Endothelial cell of umbilical vein (primary cell): ENCODE measurements at regions of chr7 and their contacts with region 1.

Region 1: GRCh38 chr7:4725014-4725849 is 43.1 kb downstream of the FOXK1 start:
- DNase-seq: peak; percentile 95
- H3K4me3 ChIP-seq: peak overlapping the region; percentile 26 to 30 (median 28)
- H3K27ac ChIP-seq: peak overlapping the region; percentile 92
- H3K4me1 ChIP-seq: peaks cover 23% of the 10 kb centered on the region
- H3K27me3 ChIP-seq: no peaks in the 10 kb centered on the region
- CTCF ChIP-seq: no peak
- POLR2A ChIP-seq: peak; percentile 67

Region 2: GRCh38 chr7:4665661-4666060 is 59.6 kb before region 1 on chr7:
- CTCF ChIA-PET with region 1: no interaction called
- POLR2A ChIA-PET with region 1: no interaction called
- dilution Hi-C with region 1: no loop called
- intact Hi-C with region 1: no loop called
- DNase-seq: peak; percentile 80
- H3K4me3 ChIP-seq: no peak overlapping the region
- H3K27ac ChIP-seq: peak overlapping the region; percentile 47
- H3K4me1 ChIP-seq: peaks cover 2% of the 10 kb centered on the region
- H3K27me3 ChIP-seq: no peaks in the 10 kb centered on the region
- CTCF ChIP-seq: no peak
- POLR2A ChIP-seq: no peak

Region 3: DNA sequence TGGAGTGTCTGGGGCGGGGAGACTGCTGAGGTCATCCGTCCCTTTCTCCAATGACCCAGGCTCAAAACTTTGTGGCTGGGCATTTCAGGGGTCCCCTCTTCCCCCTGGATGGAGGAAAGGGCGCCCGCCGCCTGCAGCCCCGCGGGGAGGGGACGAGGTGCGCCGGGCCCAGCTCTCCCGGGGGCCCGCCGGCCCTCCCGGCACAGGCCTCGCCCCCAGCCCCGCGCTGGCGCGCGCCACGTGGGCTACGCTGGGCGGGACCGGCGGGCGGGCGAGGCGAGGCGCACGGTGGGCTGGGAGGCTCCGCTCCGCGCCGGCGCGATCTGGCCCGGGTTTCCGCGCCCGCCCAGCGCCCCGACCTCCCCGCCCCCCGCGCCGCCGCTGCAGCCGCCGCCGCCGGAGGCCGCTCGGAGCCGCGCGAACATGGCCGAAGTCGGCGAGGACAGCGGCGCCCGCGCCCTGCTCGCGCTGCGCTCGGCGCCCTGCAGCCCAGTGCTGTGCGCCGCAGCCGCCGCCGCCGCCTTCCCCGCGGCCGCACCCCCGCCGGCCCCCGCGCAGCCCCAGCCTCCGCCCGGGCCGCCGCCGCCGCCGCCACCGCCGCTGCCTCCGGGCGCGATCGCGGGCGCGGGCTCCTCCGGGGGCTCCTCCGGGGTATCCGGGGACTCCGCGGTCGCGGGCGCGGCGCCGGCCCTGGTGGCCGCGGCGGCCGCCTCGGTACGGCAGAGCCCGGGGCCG is 43.2 kb before region 1 on chr7 and contains the start of gene FOXK1:
- CTCF ChIA-PET with region 1: interaction called, 3 read pairs
- POLR2A ChIA-PET with region 1: no interaction called
- dilution Hi-C with region 1: no loop called
- intact Hi-C with region 1: loop called (anchors 1 kb)
- DNase-seq: peak; percentile 39
- H3K4me3 ChIP-seq: peak within 1 kb of the TSS; percentile 69 to 76 (median 74)
- H3K27ac ChIP-seq: peak within 1 kb of the TSS; percentile 87
- H3K4me1 ChIP-seq: peaks cover 19% of the 10 kb centered on the region
- H3K27me3 ChIP-seq: no peaks in the 10 kb centered on the region
- CTCF ChIP-seq: no peak
- POLR2A ChIP-seq: peak; percentile 65
- total RNA-seq, gene FOXK1: 47.0 and 52.1 TPM in 2 replicates

Region 4: DNA sequence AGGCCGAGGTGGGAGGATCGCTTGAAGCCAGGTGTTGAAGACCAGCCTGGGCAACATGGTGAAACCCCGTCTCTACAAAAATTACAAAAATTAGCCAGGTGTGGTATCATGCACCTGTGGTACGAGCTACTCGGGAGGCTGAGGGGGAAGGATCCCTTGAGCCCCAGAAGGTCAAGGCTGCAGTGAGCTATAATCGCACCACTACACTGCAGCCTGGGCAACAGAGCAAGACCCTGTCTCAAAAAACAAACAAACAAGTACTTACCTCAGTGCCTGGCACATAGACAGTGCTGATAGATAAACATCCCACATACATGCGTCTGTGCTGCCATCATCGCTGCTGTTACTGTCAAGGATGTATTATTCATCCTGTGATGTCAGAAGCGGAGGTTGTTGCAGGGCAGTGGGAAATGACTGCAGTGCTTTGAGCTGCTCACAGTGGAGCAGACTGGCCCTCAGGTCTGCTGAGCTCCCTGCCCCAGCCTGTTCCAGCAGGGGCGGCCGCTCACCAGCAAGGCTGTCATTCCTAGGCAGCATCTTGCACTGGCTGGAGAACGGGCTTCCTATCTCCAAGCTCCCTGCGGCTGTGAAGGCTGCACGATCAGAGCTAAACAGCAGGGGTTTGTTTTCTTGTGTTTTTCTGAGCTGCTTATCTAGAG is 24.5 kb before region 1 on chr7:
- CTCF ChIA-PET with region 1: interaction called, 14 read pairs
- POLR2A ChIA-PET with region 1: no interaction called
- dilution Hi-C with region 1: no loop called
- intact Hi-C with region 1: loop called (anchors 1 kb)
- DNase-seq: peak; percentile 91
- H3K4me3 ChIP-seq: no peak overlapping the region
- H3K27ac ChIP-seq: peak overlapping the region; percentile 72
- H3K4me1 ChIP-seq: peaks cover 26% of the 10 kb centered on the region
- H3K27me3 ChIP-seq: no peaks in the 10 kb centered on the region
- CTCF ChIP-seq: peak in 1 of 2 donors; percentile 13
- POLR2A ChIP-seq: peak; percentile 56

Region 5: GRCh38 chr7:4706384-4707216 is 18.6 kb before region 1 on chr7:
- CTCF ChIA-PET with region 1: interaction called, 9 read pairs
- POLR2A ChIA-PET with region 1: interaction called, 4 read pairs
- dilution Hi-C with region 1: no loop called
- intact Hi-C with region 1: loop called (anchors 1 kb)
- DNase-seq: peak; percentile 79
- H3K4me3 ChIP-seq: peak overlapping the region in 2 of 3 experiments; percentile 3 to 31
- H3K27ac ChIP-seq: peak overlapping the region; percentile 98
- H3K4me1 ChIP-seq: peaks cover 38% of the 10 kb centered on the region
- H3K27me3 ChIP-seq: no peaks in the 10 kb centered on the region
- CTCF ChIP-seq: no peak
- POLR2A ChIP-seq: no peak

Region 6: GRCh38 chr7:4738711-4739527 is 13.7 kb after region 1 on chr7:
- CTCF ChIA-PET with region 1: interaction called, 14 read pairs
- POLR2A ChIA-PET with region 1: interaction called, 12 read pairs
- dilution Hi-C with region 1: no loop called
- intact Hi-C with region 1: loop called (anchors 1 kb)
- DNase-seq: peak; percentile 79
- H3K4me3 ChIP-seq: no peak overlapping the region
- H3K27ac ChIP-seq: peak overlapping the region; percentile 71
- H3K4me1 ChIP-seq: peaks cover 15% of the 10 kb centered on the region
- H3K27me3 ChIP-seq: no peaks in the 10 kb centered on the region
- CTCF ChIP-seq: no peak
- POLR2A ChIP-seq: no peak

Region 7: DNA sequence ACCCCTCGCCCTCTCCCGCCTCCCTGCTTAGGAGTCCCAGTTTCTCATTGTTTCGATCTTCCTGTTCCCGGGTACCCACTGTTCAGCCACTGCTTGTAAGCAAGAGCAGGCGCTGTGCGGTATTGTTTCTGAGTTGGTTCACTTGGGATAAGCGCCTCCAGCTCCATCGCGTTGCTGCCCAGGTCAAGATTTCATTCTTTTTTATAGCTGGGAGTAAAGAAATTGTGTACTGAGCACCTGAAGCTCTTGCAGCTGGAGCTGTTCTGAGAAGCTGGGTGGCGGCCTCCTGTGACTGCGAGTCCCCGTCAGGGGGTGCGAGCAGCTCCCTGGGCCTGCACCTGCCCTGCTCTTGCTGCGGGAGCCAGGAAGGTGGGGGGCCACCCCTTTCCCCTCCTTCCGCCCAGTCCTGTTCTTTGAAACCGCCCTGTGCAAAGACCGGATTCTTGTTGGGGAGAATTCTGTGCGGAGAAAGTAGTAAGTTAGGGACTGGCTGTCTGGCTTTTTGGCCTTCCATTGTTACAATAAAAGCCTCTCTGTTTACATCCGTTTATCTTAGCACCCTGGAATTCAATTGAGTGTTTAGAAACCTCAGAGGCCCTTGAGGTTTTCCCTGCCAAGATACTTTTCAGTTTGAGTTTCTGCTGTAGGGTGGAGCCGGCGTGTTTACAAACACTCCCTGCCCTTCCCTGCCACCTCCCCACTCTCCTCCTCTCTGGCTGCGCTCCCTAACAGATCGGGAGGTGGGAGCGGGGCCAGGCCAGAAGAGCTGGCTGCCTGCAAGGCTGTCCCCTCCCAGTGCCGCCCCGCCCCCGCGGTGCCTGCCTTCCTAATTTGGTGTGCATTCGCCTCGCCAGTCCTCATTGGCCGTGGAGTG is 19.4 kb after region 1 on chr7:
- CTCF ChIA-PET with region 1: interaction called, 14 read pairs
- POLR2A ChIA-PET with region 1: interaction called, 12 read pairs
- dilution Hi-C with region 1: no loop called
- intact Hi-C with region 1: loop called (anchors 1 kb)
- DNase-seq: peak; percentile 96
- H3K4me3 ChIP-seq: no peak overlapping the region
- H3K27ac ChIP-seq: peak overlapping the region; percentile 76
- H3K4me1 ChIP-seq: peaks cover 49% of the 10 kb centered on the region
- H3K27me3 ChIP-seq: no peaks in the 10 kb centered on the region
- CTCF ChIP-seq: no peak
- POLR2A ChIP-seq: no peak